ENCODE measurements at regions of chr2 and their contacts with region 1.

Region 1: DNA sequence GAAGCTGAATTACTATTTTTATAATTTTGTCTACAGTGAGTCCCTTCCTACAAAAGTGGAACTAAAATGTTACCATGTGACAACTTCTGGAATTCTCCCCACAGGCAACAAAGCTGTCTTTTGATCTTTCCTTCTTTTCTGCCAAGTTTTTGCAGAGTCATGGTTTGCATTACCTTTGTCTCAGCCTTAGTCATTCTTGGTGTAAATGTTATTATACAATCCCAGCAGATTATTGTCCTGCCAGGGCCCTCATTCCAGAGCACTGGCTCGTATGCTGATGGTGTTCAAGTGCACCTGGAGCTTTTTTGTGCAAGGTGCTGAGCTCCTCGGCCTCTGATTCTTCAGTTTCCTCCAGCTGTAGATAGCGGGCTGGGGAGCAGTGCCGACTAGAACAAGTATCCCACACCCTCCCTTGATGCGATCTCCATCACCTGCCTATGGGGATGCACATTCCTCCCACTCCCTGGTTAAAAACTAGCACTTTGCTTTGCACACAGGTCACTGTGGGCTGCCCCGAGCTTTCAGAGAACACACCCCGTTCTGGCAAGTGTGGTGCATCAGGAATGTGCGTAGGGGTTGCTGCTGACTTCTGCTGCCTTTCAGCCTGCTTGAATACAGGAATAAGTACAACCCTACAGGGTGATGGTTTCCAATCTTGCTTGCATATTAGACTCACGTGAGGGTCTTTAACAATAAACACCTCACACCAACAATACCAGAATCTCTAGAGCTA is 263.6 kb downstream of the RNF144A start:
- DNase-seq: no peak
- H3K4me3 ChIP-seq: no peak overlapping the region
- H3K27ac ChIP-seq: no peak overlapping the region
- H3K4me1 ChIP-seq: no peaks in the 10 kb centered on the region; a peak in 1 of 4 replicates
- H3K27me3 ChIP-seq: no peaks in the 10 kb centered on the region
- CTCF ChIP-seq: no peak
- EP300 ChIP-seq: no peak
- RAD21 ChIP-seq: no peak

Region 2: DNA sequence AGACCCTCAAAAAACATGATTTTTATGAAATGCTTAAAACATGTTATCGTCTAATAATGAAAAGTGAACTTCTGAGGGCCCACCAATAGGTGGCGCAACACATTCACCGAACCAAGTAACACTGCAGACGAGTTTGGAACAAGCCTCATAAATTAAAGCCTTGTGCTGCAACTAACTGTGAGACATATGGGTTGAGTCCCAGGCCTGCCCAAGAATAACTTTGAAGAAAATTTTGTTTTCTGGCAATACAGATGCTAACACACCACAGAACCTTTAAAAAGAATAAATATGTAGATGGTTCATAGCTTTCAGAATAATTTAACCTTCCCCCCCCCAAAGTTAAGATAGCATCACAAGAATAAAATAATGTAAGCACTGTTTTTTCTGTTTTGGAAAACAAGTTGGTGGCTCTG is 22.3 kb after region 1 on chr2:
- CTCF ChIA-PET with region 1: interaction called, 14 read pairs
- POLR2A ChIA-PET with region 1: no interaction called
- DNase-seq: peak; percentile 71
- H3K4me3 ChIP-seq: no peak overlapping the region
- H3K27ac ChIP-seq: no peak overlapping the region
- H3K4me1 ChIP-seq: peaks cover 2 to 7% of the 10 kb centered on the region in 2 experiments; a peak in 2 of 4 replicates
- H3K27me3 ChIP-seq: no peaks in the 10 kb centered on the region
- CTCF ChIP-seq: peak; percentile 100
- EP300 ChIP-seq: 0 out of 4 replicates have a peak, but pooled peaks of 1 of the 2 experiments have one; percentile 35
- RAD21 ChIP-seq: peak; percentile 99